ENCODE measurements at regions of chr17 and their contacts with region 1.

Region 1: GRCh38 chr17:29111816-29112499 is 68.2 kb downstream of the MYO18A start:
- DNase-seq: peak; percentile 80
- ATAC-seq: peak; percentile 59

Region 2: DNA sequence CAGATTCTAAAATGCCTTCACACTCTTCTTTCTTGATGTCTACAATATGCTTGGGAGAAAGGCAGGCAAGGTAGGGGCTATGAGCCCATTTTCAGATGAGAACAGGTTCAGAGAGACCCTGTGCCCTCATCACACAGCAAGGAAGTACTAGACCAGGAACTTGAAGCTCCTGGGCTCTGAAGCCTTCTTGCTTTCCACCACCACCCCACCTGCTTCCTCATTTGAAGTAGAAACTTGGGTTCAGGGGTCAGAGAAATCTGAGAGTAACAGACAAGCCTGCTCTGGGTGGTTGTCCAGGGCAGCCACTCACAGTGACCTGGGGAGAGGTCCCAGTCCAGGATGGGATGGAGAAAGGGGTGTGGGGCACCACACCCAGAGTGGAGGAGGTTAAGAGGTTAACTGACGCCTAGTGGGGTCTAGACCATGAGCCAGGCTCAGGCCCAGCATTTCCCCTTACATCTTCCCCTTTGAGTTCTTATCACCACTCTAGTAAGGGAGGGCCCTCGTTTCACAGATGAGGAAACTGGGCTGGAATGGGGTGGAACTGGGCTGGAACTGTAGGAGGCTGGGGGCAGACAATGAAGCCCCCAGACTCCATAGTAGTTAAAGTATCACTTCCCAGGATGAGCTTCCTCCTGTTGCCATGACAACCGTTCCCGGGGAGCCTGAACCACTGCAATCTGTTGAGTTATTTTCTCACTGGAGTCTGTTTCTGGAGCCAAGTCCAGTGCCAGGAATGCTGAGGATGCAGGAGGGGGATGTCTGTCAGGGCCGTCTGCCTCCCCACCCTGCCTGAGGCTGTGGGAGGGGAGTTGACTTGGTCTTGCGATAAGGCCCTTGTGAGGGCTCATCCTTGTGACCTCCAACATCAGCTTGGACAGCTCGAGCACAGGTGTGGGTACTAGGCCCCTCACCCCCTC is 144.5 kb before region 1 on chr17:
- intact Hi-C with region 1: loop called (anchors 5 kb)
- DNase-seq: no peak
- ATAC-seq: no peak

Measured in left ventricle myocardium superior (tissue), 1 donor.